A673 (cell line): ENCODE measurements at regions of chr2 and their contacts with region 1.

Region 1: GRCh38 chr2:183038341-183039300 is at the start of gene NCKAP1:
- DNase-seq: peak; percentile 92
- H3K4me3 ChIP-seq: peak within 1 kb of the TSS; percentile 74
- H3K27ac ChIP-seq: peak within 1 kb of the TSS; percentile 94
- H3K4me1 ChIP-seq: peaks cover 21% of the 10 kb centered on the region
- H3K27me3 ChIP-seq: no peaks in the 10 kb centered on the region
- CTCF ChIP-seq: peak; percentile 63
- total RNA-seq, gene NCKAP1: 153 and 177 TPM in 2 replicates

Region 2: GRCh38 chr2:183010112-183010511 is 28.5 kb before region 1 on chr2:
- CTCF ChIA-PET with region 1: no interaction called
- POLR2A ChIA-PET with region 1: no interaction called
- intact Hi-C with region 1: loop called (anchors 1 kb)
- DNase-seq: peak; percentile 90
- H3K4me3 ChIP-seq: no peak overlapping the region
- H3K27ac ChIP-seq: peak overlapping the region; percentile 87
- H3K4me1 ChIP-seq: peaks cover 94% of the 10 kb centered on the region
- H3K27me3 ChIP-seq: no peaks in the 10 kb centered on the region
- CTCF ChIP-seq: no peak

Region 3: GRCh38 chr2:183124222-183124956 is 85.8 kb after region 1 on chr2 and contains the start of gene NUP35:
- CTCF ChIA-PET with region 1: no interaction called
- POLR2A ChIA-PET with region 1: no interaction called
- intact Hi-C with region 1: loop called (anchors 5 kb)
- DNase-seq: peak; percentile 96
- H3K4me3 ChIP-seq: peak within 1 kb of the TSS; percentile 74
- H3K27ac ChIP-seq: peak within 1 kb of the TSS; percentile 81
- H3K4me1 ChIP-seq: peaks cover 10% of the 10 kb centered on the region
- H3K27me3 ChIP-seq: no peaks in the 10 kb centered on the region
- CTCF ChIP-seq: no peak
- total RNA-seq, gene NUP35: 55.3 and 62.0 TPM in 2 replicates

Region 4: GRCh38 chr2:183162362-183162761 is 123.7 kb after region 1 on chr2:
- CTCF ChIA-PET with region 1: no interaction called
- POLR2A ChIA-PET with region 1: no interaction called
- intact Hi-C with region 1: no loop called
- DNase-seq: no peak
- H3K4me3 ChIP-seq: no peak overlapping the region
- H3K27ac ChIP-seq: no peak overlapping the region
- H3K4me1 ChIP-seq: peaks cover 5% of the 10 kb centered on the region
- H3K27me3 ChIP-seq: no peaks in the 10 kb centered on the region
- CTCF ChIP-seq: no peak